Esophagus muscularis mucosa (tissue), 4 donors: ENCODE measurements at regions of chr3 and their contacts with region 1.

Region 1: DNA sequence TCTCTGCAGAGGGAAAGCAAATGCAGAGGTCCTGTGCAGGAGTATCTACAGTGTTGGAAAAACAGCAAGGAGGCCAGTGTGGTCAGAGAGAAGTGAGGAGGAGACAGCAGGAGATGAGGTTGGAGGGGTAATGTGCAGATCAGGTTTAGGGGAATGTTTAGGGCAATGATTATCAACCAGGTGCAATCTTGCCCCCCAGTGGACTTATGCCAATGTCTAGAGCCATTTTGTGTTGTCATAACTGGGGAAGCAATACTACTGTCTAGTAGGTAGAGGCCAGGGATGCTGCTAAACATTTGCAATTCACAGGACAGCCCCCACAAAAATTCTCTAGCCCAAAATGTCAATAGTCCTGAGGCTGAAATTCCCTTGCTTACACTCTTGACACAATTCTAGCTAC is 13.1 kb downstream of the CCDC191 start:
- DNase-seq: no peak
- H3K4me3 ChIP-seq: no peak overlapping the region
- H3K27ac ChIP-seq: no peak overlapping the region
- H3K4me1 ChIP-seq: no peaks in the 10 kb centered on the region
- H3K27me3 ChIP-seq: no peaks in the 10 kb centered on the region
- CTCF ChIP-seq: no peak
- EP300 ChIP-seq: no peak
- POLR2A ChIP-seq: no peak

Region 2: DNA sequence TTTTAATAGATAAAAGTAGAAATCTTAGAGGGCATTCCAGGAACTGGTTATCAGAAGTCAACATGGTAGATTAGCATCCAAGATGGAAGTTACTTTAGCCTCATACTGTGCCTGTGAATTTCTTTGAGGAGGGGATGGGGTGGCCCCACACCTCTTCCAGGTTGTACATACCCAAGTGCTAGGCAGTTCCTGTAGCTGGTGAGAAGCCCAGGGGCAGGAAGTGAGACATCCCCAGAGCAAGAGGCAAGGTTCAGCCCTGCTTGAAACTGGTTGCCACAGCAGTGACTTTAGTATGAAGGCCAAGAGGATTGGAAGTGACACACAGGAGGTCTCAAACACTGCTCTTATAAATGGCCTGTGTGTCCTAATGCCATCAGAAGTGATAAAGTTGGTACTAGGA is 1040.5 kb before region 1 on chr3:
- intact Hi-C with region 1: loop called (anchors 10 kb)
- DNase-seq: no peak
- H3K4me3 ChIP-seq: no peak overlapping the region
- H3K27ac ChIP-seq: no peak overlapping the region
- H3K4me1 ChIP-seq: peaks cover 0 to 4% (median 0%) of the 10 kb centered on the region in 4 donors
- H3K27me3 ChIP-seq: peaks cover 0 to 6% (median 0%) of the 10 kb centered on the region in 4 donors
- CTCF ChIP-seq: no peak
- EP300 ChIP-seq: no peak
- POLR2A ChIP-seq: no peak

Region 3: GRCh38 chr3:114272271-114272670 is 229.1 kb after region 1 on chr3:
- intact Hi-C with region 1: no loop called
- DNase-seq: no peak
- H3K4me3 ChIP-seq: no peak overlapping the region
- H3K27ac ChIP-seq: no peak overlapping the region
- H3K4me1 ChIP-seq: no peaks in the 10 kb centered on the region
- H3K27me3 ChIP-seq: no peaks in the 10 kb centered on the region
- CTCF ChIP-seq: no peak
- EP300 ChIP-seq: no peak
- POLR2A ChIP-seq: no peak

Region 4: GRCh38 chr3:114285648-114286230 is 242.5 kb after region 1 on chr3:
- intact Hi-C with region 1: no loop called
- DNase-seq: no peak
- H3K4me3 ChIP-seq: no peak overlapping the region
- H3K27ac ChIP-seq: no peak overlapping the region
- H3K4me1 ChIP-seq: no peaks in the 10 kb centered on the region
- H3K27me3 ChIP-seq: no peaks in the 10 kb centered on the region
- CTCF ChIP-seq: no peak
- EP300 ChIP-seq: no peak
- POLR2A ChIP-seq: no peak